ENCODE measurements at regions of chr2 and their contacts with region 1.

Region 1: GRCh38 chr2:85420536-85421259 is 2.2 kb downstream of the SH2D6 start:
- DNase-seq: peak; percentile 84
- H3K4me3 ChIP-seq: no peak overlapping the region
- CTCF ChIP-seq: peak; percentile 98

Region 2: GRCh38 chr2:85538486-85539360 is 118.0 kb after region 1 on chr2 and contains the start of gene MAT2A:
- in situ Hi-C with region 1: loop called (anchors 25 kb)
- DNase-seq: peak; percentile 95
- H3K4me3 ChIP-seq: peak within 1 kb of the TSS; percentile 64
- CTCF ChIP-seq: peak; percentile 80

Region 3: DNA sequence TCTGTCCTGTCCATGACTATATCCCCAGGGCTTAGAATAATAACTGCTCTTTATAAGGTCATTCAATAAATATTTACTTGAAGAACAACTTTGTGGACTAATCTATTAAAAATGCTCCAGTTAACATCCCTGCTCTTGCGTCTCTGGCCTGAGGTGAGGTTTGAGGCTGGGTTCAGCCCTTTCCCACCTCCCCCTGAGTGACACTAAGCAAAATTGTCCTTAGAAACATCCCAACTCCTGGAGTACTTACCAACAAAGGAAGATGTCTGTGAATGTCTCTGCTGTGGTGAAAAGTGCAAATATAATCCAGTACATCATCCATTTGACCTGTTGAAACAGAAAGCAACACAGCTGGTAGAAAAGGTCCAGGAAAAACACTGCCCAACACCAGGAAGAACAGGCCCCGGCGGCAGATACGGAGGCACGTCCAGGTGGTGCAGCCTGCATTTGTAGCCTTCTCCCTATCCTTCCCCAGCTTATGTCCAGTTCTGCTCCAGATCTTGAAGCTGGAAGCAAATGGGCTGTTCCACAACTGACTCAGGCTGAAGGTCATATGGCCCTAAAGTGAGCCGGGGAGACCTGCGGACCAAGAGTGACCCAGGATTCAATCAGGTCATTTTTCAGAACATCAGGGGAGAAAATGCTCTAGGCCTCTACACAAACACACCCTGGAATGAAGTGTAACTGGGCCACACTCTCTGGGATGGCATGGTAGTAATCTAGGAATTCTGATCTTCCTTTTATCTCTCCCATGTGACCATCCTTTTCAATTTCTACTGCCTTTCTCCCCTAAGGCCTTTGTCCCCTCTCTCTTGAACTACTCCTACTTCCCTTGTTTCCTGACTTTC is 843.2 kb after region 1 on chr2:
- in situ Hi-C with region 1: no loop called
- DNase-seq: no peak
- H3K4me3 ChIP-seq: no peak overlapping the region
- CTCF ChIP-seq: no peak

Measured in astrocyte of the spinal cord (primary cell).